Left ventricle myocardium superior (tissue), 1 donor: ENCODE measurements at regions of chr13 and their contacts with region 1.

Region 1: DNA sequence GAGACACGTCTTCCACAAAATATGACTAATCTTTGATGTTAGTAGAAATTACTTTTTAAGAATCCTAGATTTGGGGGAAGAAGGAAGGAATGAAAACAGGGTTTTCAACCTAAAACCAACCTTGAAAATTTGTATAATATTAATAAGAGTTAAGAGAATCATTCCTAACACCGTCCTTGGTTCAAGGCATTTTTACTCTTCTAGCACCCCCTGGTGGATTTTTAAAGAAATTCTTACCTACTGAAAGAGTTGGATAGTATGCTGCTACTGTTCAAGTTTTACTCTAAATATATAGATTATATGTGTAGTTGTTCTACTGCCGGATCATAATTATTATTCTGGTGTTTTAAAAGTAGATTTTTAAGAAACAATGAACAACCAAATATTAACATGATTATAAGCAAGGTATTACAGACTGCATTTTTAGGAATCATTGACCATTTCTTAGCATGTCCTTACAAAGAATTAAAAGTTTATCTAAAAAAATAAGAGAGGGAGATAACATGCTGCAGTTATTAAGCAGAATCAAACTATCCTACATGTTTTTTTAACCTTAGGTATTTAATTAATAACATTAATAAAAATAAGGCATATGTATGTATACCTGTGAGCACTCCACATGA is 7.4 kb upstream of the SLITRK6 start:
- DNase-seq: no peak
- ATAC-seq: no peak

Region 2: GRCh38 chr13:84917252-84917878 is 889.3 kb before region 1 on chr13:
- intact Hi-C with region 1: loop called (anchors 10 kb)
- DNase-seq: no peak
- ATAC-seq: no peak

Region 3: DNA sequence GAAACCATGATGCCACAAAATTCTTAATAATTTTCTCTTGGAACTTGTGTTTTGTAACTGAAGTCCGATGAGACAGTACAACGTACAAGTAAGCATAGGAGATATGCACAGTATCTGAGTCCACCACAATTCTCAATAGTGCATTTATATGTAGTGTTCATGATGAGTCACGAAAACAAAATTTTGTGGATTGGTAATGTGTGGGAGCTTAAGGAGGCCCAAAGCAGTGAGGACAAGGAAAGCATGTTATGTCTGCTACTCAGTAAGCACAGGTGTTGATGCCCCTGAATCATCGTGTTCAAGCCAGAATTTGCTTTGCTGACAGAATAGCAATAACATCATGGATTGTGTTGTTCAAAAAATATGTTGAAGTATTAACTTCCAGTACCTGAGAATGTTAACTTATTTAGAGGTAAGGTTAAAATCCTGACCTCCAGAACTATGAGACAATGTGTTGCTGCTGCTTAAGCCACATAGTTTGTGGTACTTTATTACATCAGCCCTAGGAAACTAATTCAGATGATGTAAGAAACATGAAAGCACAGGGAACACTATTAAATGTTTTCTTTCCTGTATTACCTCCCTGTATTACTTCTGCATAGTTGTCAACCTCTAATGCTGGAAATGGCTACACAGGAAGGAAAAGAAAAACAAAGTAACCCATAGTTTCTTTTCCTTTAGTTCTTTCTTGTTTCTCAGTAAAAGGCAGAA is 208.7 kb before region 1 on chr13:
- intact Hi-C with region 1: no loop called
- DNase-seq: no peak
- ATAC-seq: no peak

Region 4: GRCh38 chr13:85738696-85739320 is 67.9 kb before region 1 on chr13:
- intact Hi-C with region 1: no loop called
- DNase-seq: no peak
- ATAC-seq: no peak